ENCODE measurements at regions of chr2 and their contacts with region 1.

Region 1: DNA sequence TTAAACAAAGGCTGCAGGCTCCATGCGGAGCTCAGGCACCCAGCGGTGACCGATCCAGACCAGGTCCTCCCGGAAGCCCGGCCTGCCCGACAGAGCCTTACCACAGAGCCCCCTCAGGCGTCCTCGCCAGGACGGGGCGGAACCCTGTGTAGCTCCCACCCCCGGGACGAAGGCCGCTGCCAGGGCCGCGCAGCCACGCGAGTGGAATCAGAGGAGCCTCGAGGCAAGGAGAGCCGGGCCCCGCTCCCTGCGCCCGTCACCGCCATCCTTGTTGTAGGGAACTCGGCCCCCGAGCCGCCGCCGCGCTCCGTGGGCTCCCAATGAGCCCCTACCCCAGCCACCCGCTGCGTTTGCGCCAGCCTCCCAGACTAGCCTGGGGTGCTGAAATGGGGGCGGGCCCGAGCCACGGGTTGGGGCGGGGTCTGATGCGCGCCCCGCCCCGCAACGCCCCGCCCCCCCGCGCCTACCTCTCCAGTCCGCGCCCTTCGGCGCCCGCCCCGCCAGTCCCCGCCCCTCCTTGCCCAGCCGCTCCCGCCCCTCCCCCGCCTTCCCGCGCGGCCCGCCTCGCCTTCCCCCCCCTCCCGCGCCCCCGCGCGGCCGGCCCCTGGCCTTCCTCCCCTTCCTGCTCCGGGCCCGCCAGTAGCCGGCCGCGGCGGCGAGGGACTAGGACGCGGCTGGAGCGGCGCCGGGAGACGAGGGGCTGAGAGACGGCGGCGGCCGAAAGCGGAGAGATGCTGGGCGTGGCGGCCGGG is at the start of gene LIMS1:
- DNase-seq: peak; percentile 93
- H3K4me3 ChIP-seq: peak within 1 kb of the TSS; percentile 72 to 93 (median 84)
- H3K27ac ChIP-seq: peak within 1 kb of the TSS; percentile 94 to 99 (median 98)
- H3K4me1 ChIP-seq: peaks cover 7 to 49% (median 22%) of the 10 kb centered on the region in 4 donors
- H3K27me3 ChIP-seq: no peaks in the 10 kb centered on the region
- CTCF ChIP-seq: no peak
- EP300 ChIP-seq: no peak
- POLR2A ChIP-seq: peak; percentile 82
- total RNA-seq, gene LIMS1: 4.5 to 41.0 (median 24.1) TPM

Region 2: DNA sequence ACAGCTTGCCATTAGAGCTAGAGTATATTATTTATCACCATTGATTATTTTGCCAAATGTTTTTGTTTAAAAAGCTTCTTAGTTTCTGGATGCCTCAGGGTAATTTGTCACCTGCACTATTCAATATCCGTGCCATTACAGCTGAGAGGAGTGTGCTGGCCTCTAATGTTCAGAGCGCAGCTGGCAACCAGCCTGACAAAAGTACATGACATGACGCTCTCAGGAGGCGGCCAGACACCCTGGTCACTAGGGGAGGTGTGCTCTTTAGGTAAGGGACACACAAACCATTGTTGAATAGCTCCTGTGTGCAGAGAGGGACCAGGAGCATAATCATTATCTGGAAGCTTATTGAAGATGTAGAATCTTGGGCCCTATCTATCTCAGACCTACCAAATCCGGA is 20.5 kb after region 1 on chr2:
- in situ Hi-C with region 1: no loop called
- intact Hi-C with region 1: loop called (anchors 2 kb)
- DNase-seq: no peak
- H3K4me3 ChIP-seq: no peak overlapping the region
- H3K27ac ChIP-seq: peak overlapping the region; percentile 30 to 79 (median 67)
- H3K4me1 ChIP-seq: peaks cover 3 to 31% (median 13%) of the 10 kb centered on the region in 4 donors
- H3K27me3 ChIP-seq: no peaks in the 10 kb centered on the region
- CTCF ChIP-seq: no peak
- EP300 ChIP-seq: no peak
- POLR2A ChIP-seq: no peak

Region 3: DNA sequence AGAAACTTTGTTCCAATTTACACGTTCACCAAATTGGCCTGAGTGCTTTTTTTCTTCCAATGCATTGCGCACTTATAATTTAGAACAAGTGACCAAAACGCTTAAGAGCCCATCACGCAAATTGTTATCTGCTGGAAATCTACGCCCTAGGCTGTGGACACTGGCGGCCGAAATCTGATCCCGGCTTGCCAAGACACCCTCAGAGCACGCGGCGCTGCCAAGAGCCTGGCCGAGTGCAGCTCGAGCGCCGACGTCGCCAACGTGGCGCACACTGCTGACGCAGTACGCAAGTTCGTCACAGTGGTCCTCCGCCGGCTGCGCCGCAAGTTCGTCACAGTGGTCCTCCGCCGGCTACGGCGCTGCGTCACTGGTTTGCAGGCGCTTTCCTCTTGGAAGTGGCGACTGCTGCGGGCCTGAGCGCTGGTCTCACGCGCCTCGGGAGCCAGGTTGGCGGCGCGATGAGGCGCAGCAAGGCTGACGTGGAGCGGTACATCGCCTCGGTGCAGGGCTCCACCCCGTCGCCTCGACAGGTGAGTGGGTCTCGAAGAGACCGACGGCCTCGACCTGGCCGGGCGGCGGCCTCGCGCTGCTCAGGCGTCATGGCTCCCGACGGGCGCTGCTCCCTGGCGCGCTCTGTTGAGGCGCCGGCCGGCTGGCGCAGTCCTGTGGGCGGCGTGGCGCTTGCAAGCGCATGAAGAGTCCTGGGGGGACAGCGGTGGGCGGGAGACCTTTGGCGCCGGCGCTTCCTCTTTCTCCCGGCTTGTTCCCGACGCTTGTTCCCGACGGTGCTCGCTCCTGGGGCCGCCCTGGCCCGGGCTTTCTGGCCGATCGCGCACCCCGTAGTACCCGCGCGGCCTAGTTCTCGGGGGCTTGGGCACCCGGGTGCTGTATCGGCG is 185.4 kb after region 1 on chr2 and contains the start of gene RANBP2:
- in situ Hi-C with region 1: no loop called
- intact Hi-C with region 1: no loop called
- DNase-seq: peak; percentile 96
- H3K4me3 ChIP-seq: peak within 1 kb of the TSS; percentile 64 to 98 (median 78)
- H3K27ac ChIP-seq: peak within 1 kb of the TSS; percentile 94 to 100 (median 99)
- H3K4me1 ChIP-seq: peaks cover 0 to 19% (median 6%) of the 10 kb centered on the region in 4 donors
- H3K27me3 ChIP-seq: no peaks in the 10 kb centered on the region
- CTCF ChIP-seq: no peak
- EP300 ChIP-seq: peak; percentile 20
- POLR2A ChIP-seq: peak; percentile 96
- total RNA-seq, gene RANBP2: 24.7 to 64.5 (median 52.5) TPM

Region 4: GRCh38 chr2:109457794-109458193 is 923.8 kb after region 1 on chr2:
- in situ Hi-C with region 1: no loop called
- intact Hi-C with region 1: no loop called
- DNase-seq: no peak
- H3K4me3 ChIP-seq: no peak overlapping the region
- H3K27ac ChIP-seq: no peak overlapping the region
- H3K4me1 ChIP-seq: no peaks in the 10 kb centered on the region
- H3K27me3 ChIP-seq: no peaks in the 10 kb centered on the region
- CTCF ChIP-seq: no peak
- EP300 ChIP-seq: no peak
- POLR2A ChIP-seq: no peak